ENCODE measurements at regions of chr22 and their contacts with region 1.

Region 1: GRCh38 chr22:44819971-44820631 is 67.7 kb downstream of the ARHGAP8 start:
- DNase-seq: no peak
- ATAC-seq: no peak
- H3K4me3 ChIP-seq: no peak overlapping the region
- H3K27ac ChIP-seq: no peak overlapping the region
- H3K4me1 ChIP-seq: no peaks in the 10 kb centered on the region
- H3K27me3 ChIP-seq: no peaks in the 10 kb centered on the region
- CTCF ChIP-seq: no peak

Region 2: GRCh38 chr22:44807915-44808690 is 12.0 kb before region 1 on chr22:
- CTCF ChIA-PET with region 1: no interaction called
- POLR2A ChIA-PET with region 1: no interaction called
- intact Hi-C with region 1: no loop called
- DNase-seq: no peak
- ATAC-seq: no peak
- H3K4me3 ChIP-seq: no peak overlapping the region
- H3K27ac ChIP-seq: no peak overlapping the region
- H3K4me1 ChIP-seq: no peaks in the 10 kb centered on the region
- H3K27me3 ChIP-seq: no peaks in the 10 kb centered on the region
- CTCF ChIP-seq: 0 out of 2 replicates have a peak, but pooled peaks have one; percentile 25

Region 3: DNA sequence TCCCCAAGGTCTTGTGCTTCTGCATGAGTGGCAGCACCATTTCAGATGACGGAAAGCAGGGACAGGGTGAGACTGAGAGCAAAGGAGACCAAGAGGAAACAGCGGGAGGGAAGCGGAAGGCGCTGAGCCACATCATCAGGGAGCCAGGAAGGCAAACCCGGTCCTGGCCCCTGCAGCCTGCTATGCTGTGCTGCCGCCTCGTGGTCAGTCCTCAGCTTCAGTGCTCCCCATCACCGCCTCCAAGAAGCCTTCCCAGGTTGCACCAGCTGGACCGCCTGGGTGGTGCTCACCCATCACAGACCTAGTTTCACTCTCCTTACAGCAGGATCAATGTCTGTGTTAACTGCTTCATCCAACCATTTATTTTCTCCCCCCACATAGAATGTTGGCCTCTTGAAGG is 262.7 kb after region 1 on chr22:
- CTCF ChIA-PET with region 1: interaction called, 6 read pairs
- POLR2A ChIA-PET with region 1: no interaction called
- intact Hi-C with region 1: loop called (anchors 5 kb)
- DNase-seq: peak; percentile 10
- ATAC-seq: peak; percentile 45
- H3K4me3 ChIP-seq: no peak overlapping the region
- H3K27ac ChIP-seq: no peak overlapping the region
- H3K4me1 ChIP-seq: peaks cover 15% of the 10 kb centered on the region
- H3K27me3 ChIP-seq: peaks cover 4% of the 10 kb centered on the region; the same call in 1 of the 2 replicates
- CTCF ChIP-seq: peak; percentile 53

Region 4: GRCh38 chr22:45096256-45096907 is 276.3 kb after region 1 on chr22:
- CTCF ChIA-PET with region 1: no interaction called
- POLR2A ChIA-PET with region 1: no interaction called
- intact Hi-C with region 1: loop called (anchors 2 kb)
- DNase-seq: peak; percentile 72
- ATAC-seq: peak; percentile 68
- H3K4me3 ChIP-seq: no peak overlapping the region
- H3K27ac ChIP-seq: no peak overlapping the region
- H3K4me1 ChIP-seq: no peaks in the 10 kb centered on the region
- H3K27me3 ChIP-seq: no peaks in the 10 kb centered on the region
- CTCF ChIP-seq: peak; percentile 81

Measured in PC-3 (cell line).